MCF 10A (cell line): ENCODE measurements at regions of chr6 and their contacts with region 1.

Region 1: DNA sequence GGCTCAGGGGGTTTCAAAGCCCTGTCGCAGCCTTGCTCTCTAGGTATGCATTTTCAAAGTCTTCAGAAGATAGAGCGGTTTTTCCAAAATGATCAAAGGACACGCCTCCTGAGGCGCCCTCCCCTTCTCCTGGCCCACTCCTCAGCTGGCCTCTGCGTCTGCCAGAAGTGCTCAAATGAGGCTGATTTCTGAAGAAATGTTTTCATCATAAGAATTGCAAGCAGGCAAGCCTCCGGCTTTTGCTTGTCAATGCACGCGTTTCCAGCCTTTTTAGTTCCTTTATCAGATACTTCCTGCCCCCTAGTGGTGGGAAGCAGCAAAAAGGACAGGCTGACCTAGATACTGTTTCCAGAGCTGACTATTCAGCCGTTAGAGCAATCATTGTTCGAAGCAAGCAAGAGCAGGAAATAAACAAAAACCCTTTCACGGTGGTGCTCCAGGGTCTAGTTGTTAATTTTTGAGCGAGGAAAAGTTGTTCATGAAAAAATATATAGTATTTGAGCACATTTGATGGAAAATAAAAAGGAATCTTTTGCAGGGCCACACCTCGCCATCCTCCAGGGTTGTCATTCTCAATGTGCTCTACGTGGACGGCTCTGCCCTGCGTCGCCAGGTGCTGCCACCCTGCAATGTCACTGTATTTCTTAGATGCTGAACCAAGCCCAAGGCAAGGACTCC is 93.4 kb upstream of the ASF1A start:
- DNase-seq: peak; percentile 86
- H3K4me3 Mint-ChIP-seq: no peak overlapping the region
- H3K27ac Mint-ChIP-seq: no peak overlapping the region
- H3K4me1 Mint-ChIP-seq: peaks cover 7% of the 10 kb centered on the region
- H3K27me3 Mint-ChIP-seq: no peaks in the 10 kb centered on the region
- CTCF ChIP-seq: peak; percentile 81

Region 2: GRCh38 chr6:118825661-118826060 is 25.1 kb after region 1 on chr6:
- CTCF ChIA-PET with region 1: interaction called, 12 read pairs
- POLR2A ChIA-PET with region 1: no interaction called
- intact Hi-C with region 1: no loop called
- DNase-seq: no peak
- H3K4me3 Mint-ChIP-seq: no peak overlapping the region
- H3K27ac Mint-ChIP-seq: no peak overlapping the region
- H3K4me1 Mint-ChIP-seq: no peaks in the 10 kb centered on the region
- H3K27me3 Mint-ChIP-seq: no peaks in the 10 kb centered on the region
- CTCF ChIP-seq: no peak